ENCODE measurements at regions of chr9 and their contacts with region 1.

Region 1: GRCh38 chr9:119968836-119969707 is 599.8 kb upstream of the BRINP1 start:
- DNase-seq: peak; percentile 45 to 71
- ATAC-seq: peak; percentile 77

Region 2: GRCh38 chr9:119556129-119556875 is 412.8 kb before region 1 on chr9:
- intact Hi-C with region 1: loop called in 1 of 2 experiments (anchors 5 kb)
- DNase-seq: peak; percentile 64 to 84
- ATAC-seq: peak; percentile 96

Region 3: GRCh38 chr9:119781886-119782285 is 187.2 kb before region 1 on chr9:
- intact Hi-C with region 1: no loop called
- DNase-seq: no peak
- ATAC-seq: no peak

Region 4: DNA sequence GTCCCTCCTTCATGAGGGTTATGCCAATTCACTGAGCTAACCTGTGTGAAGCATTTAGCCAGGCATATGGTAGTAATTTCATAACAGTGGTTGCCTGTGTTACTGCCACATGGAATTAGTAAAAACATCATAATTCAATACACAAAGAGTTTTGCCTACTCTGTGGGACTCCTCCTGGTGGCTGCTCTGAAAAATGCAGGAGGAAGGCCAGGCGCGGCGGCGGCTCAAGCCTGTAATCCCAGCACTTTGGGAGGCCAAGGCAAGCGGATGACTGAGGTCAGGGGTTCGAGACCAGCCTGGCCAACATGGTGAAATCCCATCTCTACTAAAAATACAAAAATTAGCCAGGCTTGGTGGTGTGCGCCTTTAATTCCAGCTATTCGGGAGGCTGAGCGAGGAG is 63.6 kb after region 1 on chr9:
- intact Hi-C with region 1: no loop called
- DNase-seq: no peak
- ATAC-seq: no peak

Measured in left colon (tissue), 2 donors.